ENCODE measurements at regions of chr1 and their contacts with region 1.

Region 1: GRCh38 chr1:242128951-242129502 is 130.1 kb upstream of the MAP1LC3C start:
- DNase-seq: no peak
- H3K4me3 ChIP-seq: no peak overlapping the region
- H3K27ac ChIP-seq: no peak overlapping the region
- H3K4me1 ChIP-seq: no peaks in the 10 kb centered on the region
- H3K27me3 ChIP-seq: peaks cover 5% of the 10 kb centered on the region; the same call in 1 of the 2 replicates
- CTCF ChIP-seq: peak; percentile 51; the same call in 1 of the 2 replicates

Region 2: GRCh38 chr1:241895013-241895412 is 234.0 kb before region 1 on chr1:
- CTCF ChIA-PET with region 1: no interaction called
- POLR2A ChIA-PET with region 1: no interaction called
- intact Hi-C with region 1: loop called (anchors 10 kb)
- DNase-seq: peak in 1 of 2 experiments; percentile 92
- H3K4me3 ChIP-seq: no peak overlapping the region
- H3K27ac ChIP-seq: peak overlapping the region; percentile 29
- H3K4me1 ChIP-seq: peaks cover 14% of the 10 kb centered on the region; the same call in 1 of the 2 replicates
- H3K27me3 ChIP-seq: no peaks in the 10 kb centered on the region
- CTCF ChIP-seq: no peak

Region 3: DNA sequence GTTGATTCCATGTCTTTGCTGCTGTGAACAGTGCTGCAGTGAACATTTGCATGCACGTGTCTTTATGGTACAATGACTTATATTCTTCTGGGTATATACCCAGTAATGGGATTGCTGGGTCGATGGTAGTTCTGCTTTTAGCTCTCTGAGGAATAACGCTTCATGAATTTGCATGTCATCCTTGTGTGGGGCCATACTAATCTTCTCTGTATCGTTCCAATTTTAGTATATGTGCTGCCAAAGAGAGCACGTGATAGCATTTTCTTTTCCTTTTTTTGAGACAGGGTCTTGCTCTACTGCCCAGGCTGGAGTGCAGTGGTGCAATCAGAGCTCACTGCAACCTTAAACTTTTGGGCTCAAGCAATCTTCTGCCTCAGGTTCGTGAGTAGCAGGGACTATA is 105.2 kb before region 1 on chr1:
- CTCF ChIA-PET with region 1: no interaction called
- POLR2A ChIA-PET with region 1: no interaction called
- intact Hi-C with region 1: loop called (anchors 5 kb)
- DNase-seq: no peak
- H3K4me3 ChIP-seq: no peak overlapping the region
- H3K27ac ChIP-seq: no peak overlapping the region
- H3K4me1 ChIP-seq: no peaks in the 10 kb centered on the region
- H3K27me3 ChIP-seq: peaks cover 31% of the 10 kb centered on the region
- CTCF ChIP-seq: no peak

Measured in PC-9 (cell line).